ENCODE measurements at regions of chr22 and their contacts with region 1.

Region 1: GRCh38 chr22:22848364-22848866 is 39.2 kb upstream of the IGLL5 start:
- DNase-seq: peak; percentile 31
- ATAC-seq: peak; percentile 86
- H3K4me3 ChIP-seq: no peak overlapping the region
- H3K27ac ChIP-seq: no peak overlapping the region
- H3K4me1 ChIP-seq: no peaks in the 10 kb centered on the region
- H3K27me3 ChIP-seq: peaks cover 1% of the 10 kb centered on the region
- CTCF ChIP-seq: peak; percentile 64
- POLR2A ChIP-seq: no peak
- RAD21 ChIP-seq: peak; percentile 62

Region 2: GRCh38 chr22:22877523-22878210 is 29.3 kb after region 1 on chr22:
- CTCF ChIA-PET with region 1: interaction called, 3 read pairs
- POLR2A ChIA-PET with region 1: no interaction called
- dilution Hi-C with region 1: no loop called
- in situ Hi-C with region 1: no loop called
- intact Hi-C with region 1: loop called (anchors 1 kb)
- DNase-seq: peak; percentile 45
- ATAC-seq: peak; percentile 82
- H3K4me3 ChIP-seq: no peak overlapping the region
- H3K27ac ChIP-seq: no peak overlapping the region
- H3K4me1 ChIP-seq: no peaks in the 10 kb centered on the region
- H3K27me3 ChIP-seq: peaks cover 6% of the 10 kb centered on the region
- CTCF ChIP-seq: peak; percentile 74
- POLR2A ChIP-seq: no peak
- RAD21 ChIP-seq: peak; percentile 67

Region 3: DNA sequence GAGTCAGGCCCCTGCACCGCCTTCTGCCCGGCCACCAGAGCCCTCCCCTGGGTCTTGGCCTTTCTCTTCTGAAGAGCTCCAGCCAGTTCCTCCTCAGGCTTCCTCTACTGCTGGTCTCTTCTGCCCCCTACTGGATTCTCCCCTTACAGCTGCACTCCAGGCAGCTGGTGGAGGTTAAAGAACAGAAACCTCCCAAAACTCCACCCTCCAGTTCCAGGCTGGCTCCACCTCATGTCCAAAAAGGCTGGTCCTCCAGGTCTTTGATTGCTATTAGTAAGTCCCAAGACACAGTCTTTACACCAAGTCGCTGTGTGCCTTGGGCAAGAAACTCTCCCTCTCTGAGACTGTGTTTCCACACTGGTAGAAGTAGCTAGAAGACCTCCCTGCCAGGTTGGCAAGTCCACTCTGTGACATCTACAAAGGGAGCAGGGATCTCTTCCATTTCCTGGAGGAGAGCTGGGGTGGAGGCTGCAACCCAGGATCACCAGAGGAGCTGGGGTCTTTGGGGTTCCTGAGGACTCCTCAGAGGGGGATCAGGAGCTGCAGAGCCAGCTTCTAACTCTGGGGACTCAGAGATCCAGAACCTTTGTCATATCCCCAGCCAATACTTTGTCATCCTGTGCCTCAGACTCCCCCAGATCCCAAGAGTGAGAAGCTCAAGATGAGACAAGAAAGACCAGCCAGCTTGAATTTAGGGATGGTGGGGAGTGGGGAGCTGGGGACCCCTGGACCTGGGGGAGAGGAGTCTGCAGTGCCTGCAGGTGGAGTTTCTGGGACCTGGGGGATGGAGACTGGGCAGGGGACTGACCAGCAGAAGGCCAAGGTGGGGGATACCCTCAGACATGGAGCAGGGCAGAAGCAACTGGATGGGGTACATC is 35.8 kb after region 1 on chr22:
- CTCF ChIA-PET with region 1: no interaction called
- POLR2A ChIA-PET with region 1: no interaction called
- dilution Hi-C with region 1: no loop called
- in situ Hi-C with region 1: no loop called
- intact Hi-C with region 1: loop called (anchors 2 kb)
- DNase-seq: peak; percentile 45
- ATAC-seq: peak; percentile 85
- H3K4me3 ChIP-seq: no peak overlapping the region
- H3K27ac ChIP-seq: no peak overlapping the region
- H3K4me1 ChIP-seq: no peaks in the 10 kb centered on the region
- H3K27me3 ChIP-seq: peaks cover 7% of the 10 kb centered on the region
- CTCF ChIP-seq: peak; percentile 67
- POLR2A ChIP-seq: no peak
- RAD21 ChIP-seq: peak; percentile 79

Region 4: GRCh38 chr22:23128269-23129108 is 280.1 kb after region 1 on chr22:
- CTCF ChIA-PET with region 1: no interaction called
- POLR2A ChIA-PET with region 1: no interaction called
- dilution Hi-C with region 1: no loop called
- in situ Hi-C with region 1: loop called (anchors 10 kb)
- intact Hi-C with region 1: loop called (anchors 5 kb)
- DNase-seq: peak; percentile 84
- ATAC-seq: peak; percentile 97
- H3K4me3 ChIP-seq: no peak overlapping the region
- H3K27ac ChIP-seq: no peak overlapping the region
- H3K4me1 ChIP-seq: peaks cover 3% of the 10 kb centered on the region; the same call in 1 of the 2 replicates
- H3K27me3 ChIP-seq: peaks cover 21% of the 10 kb centered on the region
- CTCF ChIP-seq: peak; percentile 96
- POLR2A ChIP-seq: 0 out of 2 replicates have a peak, but pooled peaks have one; percentile 28
- RAD21 ChIP-seq: peak; percentile 97